ENCODE measurements at regions of chr7 and their contacts with region 1.

Region 1: DNA sequence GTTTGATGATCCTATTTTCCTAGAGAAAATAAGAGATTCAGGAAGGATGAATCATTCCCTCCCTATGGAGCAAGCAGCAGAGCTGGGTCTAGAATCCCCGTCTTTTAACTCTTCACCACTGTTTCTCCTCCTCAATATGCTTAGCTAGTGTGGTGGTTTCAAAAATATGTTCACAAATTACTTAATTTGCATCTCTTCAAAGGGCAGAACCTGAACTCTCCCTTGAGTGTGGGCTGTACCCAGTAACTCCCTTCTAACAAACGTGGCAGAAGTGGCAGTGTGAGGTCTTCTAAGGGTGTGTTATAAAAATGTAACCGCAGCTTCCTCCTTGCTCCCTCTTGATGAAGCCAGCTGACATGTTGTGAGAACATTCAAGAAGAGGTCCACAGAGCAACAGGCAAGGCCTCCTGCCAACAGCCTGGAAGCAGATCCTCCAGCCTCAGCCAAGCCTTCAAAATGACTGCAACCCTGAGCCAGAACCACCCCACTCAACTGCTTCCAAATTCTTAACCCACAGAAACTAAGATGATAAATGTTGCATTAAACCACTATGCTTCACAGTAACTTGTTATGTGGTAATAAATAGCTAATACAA is 36.6 kb downstream of the SRPK2 start:
- DNase-seq: peak; percentile 22 to 88 (median 82)
- ATAC-seq: peak; percentile 99
- H3K4me3 ChIP-seq: peak overlapping the region; percentile 44
- H3K4me3 Mint-ChIP-seq: peak overlapping the region; percentile 74 to 89 (median 81)
- H3K27ac ChIP-seq: peak overlapping the region; percentile 48
- H3K27ac Mint-ChIP-seq: peak overlapping the region; percentile 73 to 98 (median 92)
- H3K4me1 ChIP-seq: peaks cover 62 to 67% of the 10 kb centered on the region in 2 donors
- H3K4me1 Mint-ChIP-seq: peaks cover 45 to 82% (median 66%) of the 10 kb centered on the region in 7 donors
- H3K27me3 ChIP-seq: no peaks in the 10 kb centered on the region
- H3K27me3 Mint-ChIP-seq: no peaks in the 10 kb centered on the region

Region 2: GRCh38 chr7:105369944-105370343 is 17.8 kb after region 1 on chr7:
- CTCF ChIA-PET with region 1: no interaction called
- POLR2A ChIA-PET with region 1: interaction called, 4 read pairs
- intact Hi-C with region 1: loop called in 1 of 2 experiments (anchors 2 kb)
- DNase-seq: no peak
- ATAC-seq: no peak
- H3K4me3 ChIP-seq: no peak overlapping the region
- H3K4me3 Mint-ChIP-seq: no peak overlapping the region
- H3K27ac ChIP-seq: no peak overlapping the region
- H3K27ac Mint-ChIP-seq: peak overlapping the region in 6 of 9 donors; percentile 0 to 47 (median 23)
- H3K4me1 ChIP-seq: peaks cover 10 to 11% of the 10 kb centered on the region in 2 donors
- H3K4me1 Mint-ChIP-seq: peaks cover 7 to 80% (median 56%) of the 10 kb centered on the region in 7 donors
- H3K27me3 ChIP-seq: no peaks in the 10 kb centered on the region
- H3K27me3 Mint-ChIP-seq: no peaks in the 10 kb centered on the region

Region 3: GRCh38 chr7:105388373-105389087 is 36.4 kb after region 1 on chr7 and contains the start of gene SRPK2:
- CTCF ChIA-PET with region 1: interaction called, 6 read pairs
- POLR2A ChIA-PET with region 1: interaction called, 17 read pairs
- intact Hi-C with region 1: loop called (anchors 1 kb)
- DNase-seq: peak; percentile 61 to 79 (median 73)
- ATAC-seq: peak; percentile 86
- H3K4me3 ChIP-seq: peak within 1 kb of the TSS; percentile 77
- H3K4me3 Mint-ChIP-seq: peak within 1 kb of the TSS; percentile 91 to 100 (median 98)
- H3K27ac ChIP-seq: peak within 1 kb of the TSS; percentile 82
- H3K27ac Mint-ChIP-seq: peak within 1 kb of the TSS; percentile 90 to 99 (median 95)
- H3K4me1 ChIP-seq: peaks cover 5 to 12% of the 10 kb centered on the region in 2 donors
- H3K4me1 Mint-ChIP-seq: peaks cover 19 to 46% (median 40%) of the 10 kb centered on the region in 7 donors
- H3K27me3 ChIP-seq: no peaks in the 10 kb centered on the region
- H3K27me3 Mint-ChIP-seq: peaks cover 0 to 2% (median 0%) of the 10 kb centered on the region in 5 donors
- total RNA-seq, gene SRPK2: 45.1 to 56.7 (median 46.8) TPM